ENCODE measurements at regions of chr2 and their contacts with region 1.

Region 1: GRCh38 chr2:149561309-149561926 is 26.2 kb downstream of the MMADHC start:
- DNase-seq: peak; percentile 30
- ATAC-seq: peak; percentile 38; the same call in 1 of the 2 replicates
- H3K4me3 ChIP-seq: no peak overlapping the region
- H3K27ac ChIP-seq: no peak overlapping the region
- H3K4me1 ChIP-seq: no peaks in the 10 kb centered on the region
- H3K27me3 ChIP-seq: no peaks in the 10 kb centered on the region
- CTCF ChIP-seq: peak; percentile 83
- POLR2A ChIP-seq: no peak
- RAD21 ChIP-seq: peak; percentile 71

Region 2: DNA sequence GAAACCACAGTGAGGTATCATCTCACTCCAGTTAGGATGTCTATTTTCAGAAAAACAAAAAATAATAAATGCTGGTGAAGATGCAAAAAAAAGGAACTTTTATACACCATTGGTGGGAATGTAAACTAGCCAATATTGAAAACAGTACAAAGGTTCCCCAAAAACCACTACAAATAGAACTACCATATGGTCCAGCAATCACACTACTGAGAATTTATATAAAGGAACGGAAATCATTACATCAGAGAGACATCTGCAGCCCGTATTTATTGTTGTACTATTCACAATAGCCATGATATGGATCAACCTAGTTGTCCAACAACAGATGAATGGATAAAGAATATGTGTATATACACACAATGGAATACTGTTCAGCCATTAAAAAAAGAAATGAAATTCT is 1592.8 kb before region 1 on chr2:
- CTCF ChIA-PET with region 1: no interaction called
- POLR2A ChIA-PET with region 1: no interaction called
- dilution Hi-C with region 1: no loop called
- in situ Hi-C with region 1: loop called (anchors 25 kb)
- intact Hi-C with region 1: no loop called
- DNase-seq: no peak
- ATAC-seq: no peak
- H3K4me3 ChIP-seq: no peak overlapping the region
- H3K27ac ChIP-seq: no peak overlapping the region
- H3K4me1 ChIP-seq: no peaks in the 10 kb centered on the region
- H3K27me3 ChIP-seq: no peaks in the 10 kb centered on the region
- CTCF ChIP-seq: no peak
- POLR2A ChIP-seq: no peak
- RAD21 ChIP-seq: no peak

Region 3: DNA sequence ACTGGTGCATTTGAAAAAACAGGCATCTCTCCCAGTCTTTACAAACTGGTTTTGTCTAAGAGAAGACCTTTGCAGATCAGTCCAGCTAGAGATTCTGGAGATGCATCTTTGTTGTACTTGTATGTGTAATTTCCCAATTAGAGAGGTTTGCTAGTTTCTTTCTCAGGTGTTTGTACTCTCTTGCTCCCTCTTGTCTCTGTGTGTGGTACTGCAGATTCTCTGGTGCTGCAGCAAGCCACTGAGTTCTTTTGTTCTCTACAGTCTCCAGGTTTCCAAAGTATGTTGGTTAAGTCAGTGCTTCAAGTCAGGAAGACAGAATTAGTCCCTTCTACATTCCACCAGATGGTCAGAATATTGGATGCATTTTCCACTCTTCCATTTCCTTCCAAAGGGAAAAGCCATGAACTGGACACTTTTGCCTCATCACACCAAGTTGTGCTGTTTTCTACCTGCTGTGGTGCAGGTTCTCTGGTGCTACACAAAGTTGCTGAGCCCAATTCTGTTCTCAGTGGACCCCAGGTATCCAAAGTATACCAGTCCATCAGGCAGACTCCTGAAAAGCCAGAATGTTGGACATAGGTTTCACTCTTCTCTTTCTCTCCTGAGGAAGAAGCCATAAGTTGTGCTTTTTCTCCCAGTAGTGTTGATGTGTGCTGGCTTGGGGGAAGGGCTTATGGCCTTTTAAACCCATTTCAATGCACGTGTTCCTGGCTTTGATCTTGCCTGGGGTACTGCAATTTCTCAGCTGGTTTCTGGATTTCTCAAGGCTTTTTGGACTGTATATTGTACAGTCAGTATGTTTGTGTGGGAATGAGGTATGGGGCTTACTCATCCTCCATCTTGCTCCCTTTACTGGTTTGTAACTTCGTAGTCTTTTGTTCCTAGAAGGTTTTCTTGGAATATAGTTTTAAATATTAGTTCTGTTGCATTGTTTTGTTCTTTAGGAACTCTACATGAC is 887.1 kb before region 1 on chr2:
- CTCF ChIA-PET with region 1: no interaction called
- POLR2A ChIA-PET with region 1: no interaction called
- dilution Hi-C with region 1: no loop called
- in situ Hi-C with region 1: loop called (anchors 25 kb)
- intact Hi-C with region 1: no loop called
- DNase-seq: peak; percentile 77
- ATAC-seq: peak; percentile 84
- H3K4me3 ChIP-seq: no peak overlapping the region
- H3K27ac ChIP-seq: no peak overlapping the region
- H3K4me1 ChIP-seq: peaks cover 12% of the 10 kb centered on the region
- H3K27me3 ChIP-seq: no peaks in the 10 kb centered on the region
- CTCF ChIP-seq: peak; percentile 26; the same call in 1 of the 2 replicates
- POLR2A ChIP-seq: no peak
- RAD21 ChIP-seq: no peak

Region 4: DNA sequence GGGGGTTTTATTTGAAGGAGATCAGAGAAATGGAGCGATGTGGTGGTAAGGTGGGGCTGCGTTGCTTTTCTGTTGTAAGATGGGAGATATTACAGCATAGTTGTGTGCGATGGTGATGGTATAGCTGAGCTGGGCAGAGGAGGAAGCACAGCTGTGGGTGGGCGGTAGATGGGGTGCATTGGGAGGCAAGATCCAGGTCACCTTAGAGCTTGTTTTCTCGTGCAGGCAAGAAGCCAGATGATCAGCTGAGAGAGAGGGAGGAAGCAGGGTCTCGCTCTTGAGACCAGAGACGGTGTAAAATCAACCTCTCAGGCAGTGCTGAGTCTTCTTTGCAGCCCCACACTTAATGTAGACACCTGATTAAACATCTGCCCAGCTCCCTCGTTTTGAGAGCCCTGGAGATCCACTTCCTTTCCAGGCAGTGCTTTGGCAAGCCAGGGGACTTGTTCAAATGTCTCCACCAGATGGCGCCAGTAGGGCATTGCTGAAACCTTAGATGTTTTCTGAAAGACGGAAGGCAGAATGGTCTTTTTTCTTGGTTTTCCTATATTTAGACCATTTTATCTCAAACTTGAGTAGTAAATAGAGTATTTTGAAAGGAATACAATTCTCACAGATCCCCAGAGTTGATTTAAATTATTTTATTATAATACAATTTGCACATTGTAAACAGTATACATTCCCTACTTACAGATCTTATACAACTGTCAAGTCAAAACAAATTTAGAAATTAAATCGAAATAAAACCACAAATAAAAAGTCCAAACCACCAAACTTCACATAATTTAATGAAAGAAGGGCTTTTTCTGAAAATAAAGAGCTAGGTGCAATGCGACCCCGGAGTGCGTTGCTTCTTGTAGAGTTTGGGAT is 544.1 kb before region 1 on chr2:
- CTCF ChIA-PET with region 1: interaction called, 49 read pairs
- POLR2A ChIA-PET with region 1: no interaction called
- dilution Hi-C with region 1: no loop called
- in situ Hi-C with region 1: loop called (anchors 5 kb)
- intact Hi-C with region 1: loop called (anchors 1 kb)
- DNase-seq: peak; percentile 72
- ATAC-seq: peak; percentile 80
- H3K4me3 ChIP-seq: no peak overlapping the region
- H3K27ac ChIP-seq: no peak overlapping the region
- H3K4me1 ChIP-seq: no peaks in the 10 kb centered on the region
- H3K27me3 ChIP-seq: no peaks in the 10 kb centered on the region; the same call in 1 of the 2 replicates
- CTCF ChIP-seq: peak; percentile 90
- POLR2A ChIP-seq: no peak
- RAD21 ChIP-seq: peak; percentile 88

Region 5: DNA sequence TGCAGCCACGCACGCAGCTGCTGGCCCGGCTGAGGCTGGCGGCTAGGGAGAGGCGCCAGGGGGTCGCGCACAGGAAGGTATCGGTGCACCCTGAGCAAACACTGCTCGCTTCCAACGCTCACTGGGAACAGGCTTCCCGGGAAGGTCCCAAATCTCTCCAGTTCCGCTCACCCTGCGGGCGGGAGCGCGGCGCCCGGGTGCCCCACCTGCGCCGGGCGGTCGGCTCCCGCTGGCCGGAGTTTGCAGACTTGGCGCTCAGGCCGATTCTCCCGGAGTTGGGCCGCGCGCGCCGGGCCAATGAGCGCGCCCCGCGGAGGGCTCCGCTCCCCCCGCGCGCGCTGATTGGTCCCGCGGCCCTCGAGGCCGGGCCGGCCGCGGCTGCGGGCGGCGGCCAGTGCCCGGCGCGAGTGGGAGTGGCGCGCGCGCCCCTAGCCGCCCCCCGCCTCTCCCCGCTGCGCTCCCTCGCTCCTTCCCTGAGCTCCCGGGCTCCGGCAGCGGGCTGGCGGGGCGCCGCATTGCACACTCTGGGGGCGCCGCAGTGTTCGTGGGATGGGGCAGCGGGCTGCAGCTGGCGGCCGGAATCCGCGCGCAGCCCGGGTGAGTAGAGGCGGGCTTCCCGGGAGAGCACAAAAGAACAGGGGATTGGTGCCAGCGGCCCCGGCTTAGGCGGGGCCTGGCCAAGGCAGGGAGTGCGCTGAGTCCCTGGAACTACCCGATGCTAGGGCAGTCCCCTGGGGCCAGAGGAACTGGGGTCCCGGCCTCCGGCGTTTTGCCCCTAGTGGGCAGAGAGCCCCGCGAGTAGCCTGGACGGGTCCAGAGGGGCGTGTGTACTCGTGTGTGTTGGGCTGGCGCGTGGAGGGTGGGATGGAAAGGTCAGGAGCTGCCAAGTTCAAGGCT is 231.0 kb before region 1 on chr2 and contains the start of gene LYPD6:
- CTCF ChIA-PET with region 1: no interaction called
- POLR2A ChIA-PET with region 1: no interaction called
- dilution Hi-C with region 1: no loop called
- in situ Hi-C with region 1: no loop called
- intact Hi-C with region 1: loop called (anchors 5 kb)
- DNase-seq: peak; percentile 52
- ATAC-seq: peak; percentile 100
- H3K4me3 ChIP-seq: peak within 1 kb of the TSS; percentile 56
- H3K27ac ChIP-seq: no peak within 1 kb of the TSS
- H3K4me1 ChIP-seq: 0 out of 2 replicates have a peak, but pooled peaks cover 3% of the 10 kb centered on the region
- H3K27me3 ChIP-seq: peaks cover 14% of the 10 kb centered on the region
- CTCF ChIP-seq: no peak
- POLR2A ChIP-seq: no peak
- RAD21 ChIP-seq: no peak
- total RNA-seq, gene LYPD6: 0.90 and 1.4 TPM in 2 replicates

Region 6: DNA sequence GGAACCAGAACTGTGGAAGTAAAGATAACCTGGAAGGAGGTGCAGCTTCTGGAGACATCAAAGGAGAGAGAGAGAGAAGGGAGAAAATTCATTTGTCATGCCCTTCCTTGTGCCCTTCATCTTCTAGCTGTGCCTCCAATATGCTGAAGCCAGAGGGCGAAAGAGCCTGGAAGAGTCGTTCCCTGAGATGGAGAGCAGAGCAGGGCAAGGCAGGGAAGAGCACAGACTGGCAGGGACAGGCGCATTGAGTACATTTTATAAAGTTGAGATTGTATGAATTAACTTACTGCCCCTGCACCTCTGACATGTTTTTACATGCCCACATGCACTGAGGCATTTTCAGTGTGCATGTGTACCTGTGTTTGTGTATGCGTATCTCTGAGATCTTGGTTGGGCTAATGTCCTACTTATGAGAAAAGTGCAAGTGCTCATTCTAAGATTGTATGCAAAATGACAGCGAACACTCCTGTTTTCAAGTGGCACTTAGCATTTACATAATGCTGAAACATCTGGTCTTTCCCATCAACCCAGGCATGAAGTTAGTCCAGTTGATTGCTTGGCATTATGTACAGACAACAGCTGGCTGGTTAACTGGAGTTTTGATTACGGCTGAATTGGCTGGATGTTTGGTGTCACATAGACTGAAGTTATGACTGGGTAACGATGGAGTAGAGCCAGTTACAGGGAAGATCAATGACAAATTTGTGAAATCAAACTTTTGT is 49.8 kb after region 1 on chr2:
- CTCF ChIA-PET with region 1: no interaction called
- POLR2A ChIA-PET with region 1: no interaction called
- dilution Hi-C with region 1: no loop called
- in situ Hi-C with region 1: no loop called
- intact Hi-C with region 1: no loop called
- DNase-seq: no peak
- ATAC-seq: no peak
- H3K4me3 ChIP-seq: no peak overlapping the region
- H3K27ac ChIP-seq: no peak overlapping the region
- H3K4me1 ChIP-seq: peaks cover 10% of the 10 kb centered on the region
- H3K27me3 ChIP-seq: no peaks in the 10 kb centered on the region
- CTCF ChIP-seq: no peak
- POLR2A ChIP-seq: no peak
- RAD21 ChIP-seq: 0 out of 2 replicates have a peak, but pooled peaks have one; percentile 13

Measured in IMR-90 (cell line).